OCI-LY7 (cell line): ENCODE measurements at regions of chr5 and their contacts with region 1.

Region 1: GRCh38 chr5:6712577-6713275 is 506 bp upstream of the TENT4A start:
- DNase-seq: peak; percentile 96
- H3K4me3 ChIP-seq: peak overlapping the region; percentile 71
- H3K27ac ChIP-seq: peak overlapping the region; percentile 70
- H3K4me1 ChIP-seq: peaks cover 50% of the 10 kb centered on the region
- CTCF ChIP-seq: 0 out of 2 replicates have a peak, but pooled peaks have one; percentile 2

Region 2: GRCh38 chr5:6652025-6652424 is 60.7 kb before region 1 on chr5:
- CTCF ChIA-PET with region 1: no interaction called
- POLR2A ChIA-PET with region 1: interaction called, 3 read pairs
- intact Hi-C with region 1: loop called (anchors 1 kb)
- DNase-seq: peak; percentile 94
- H3K4me3 ChIP-seq: peak overlapping the region; percentile 55
- H3K27ac ChIP-seq: peak overlapping the region; percentile 61
- H3K4me1 ChIP-seq: peaks cover 47% of the 10 kb centered on the region
- CTCF ChIP-seq: no peak

Region 3: DNA sequence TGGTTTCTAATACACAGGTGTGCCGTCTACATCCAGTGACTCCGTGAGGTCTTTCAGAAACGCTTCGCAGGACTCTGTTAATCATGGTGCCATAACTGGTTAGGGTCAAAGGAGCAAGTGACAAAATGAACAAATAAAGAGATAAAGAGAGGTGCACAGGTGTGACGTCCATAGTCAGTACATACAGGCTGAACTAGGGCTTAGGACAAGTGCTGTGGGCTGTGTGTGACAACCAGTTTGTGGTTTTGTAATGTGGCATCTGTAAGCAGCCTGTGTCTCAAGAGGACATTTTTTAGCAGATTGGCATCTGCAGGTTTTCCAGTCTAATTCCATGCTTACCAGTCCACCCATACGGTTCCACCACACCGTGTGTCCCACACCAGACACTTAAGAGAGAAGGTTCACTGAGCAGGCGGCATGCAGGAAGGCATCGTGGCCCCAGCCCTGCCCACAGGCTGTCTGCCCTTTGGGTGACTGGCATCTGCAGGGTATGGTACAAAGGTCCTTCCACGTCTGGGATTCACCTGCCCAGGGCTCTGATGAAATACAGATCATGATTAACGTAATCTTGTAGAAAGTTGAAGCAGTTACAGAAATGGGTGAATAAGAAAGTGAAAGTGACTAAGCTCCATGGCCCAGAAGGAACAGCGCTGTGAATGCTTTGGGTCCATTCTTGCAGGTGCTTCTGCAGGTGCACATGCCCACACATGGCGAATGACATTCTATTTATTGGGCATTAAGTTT is 52.6 kb before region 1 on chr5:
- CTCF ChIA-PET with region 1: no interaction called
- POLR2A ChIA-PET with region 1: no interaction called
- intact Hi-C with region 1: loop called (anchors 1 kb)
- DNase-seq: peak; percentile 88
- H3K4me3 ChIP-seq: peak overlapping the region; percentile 61
- H3K27ac ChIP-seq: peak overlapping the region; percentile 92
- H3K4me1 ChIP-seq: peaks cover 32% of the 10 kb centered on the region
- CTCF ChIP-seq: no peak

Region 4: GRCh38 chr5:6728011-6728794 is 15.5 kb after region 1 on chr5:
- CTCF ChIA-PET with region 1: no interaction called
- POLR2A ChIA-PET with region 1: interaction called, 8 read pairs
- intact Hi-C with region 1: loop called (anchors 2 kb)
- DNase-seq: peak; percentile 84
- H3K4me3 ChIP-seq: peak overlapping the region; percentile 55
- H3K27ac ChIP-seq: peak overlapping the region; percentile 86
- H3K4me1 ChIP-seq: peaks cover 54% of the 10 kb centered on the region
- CTCF ChIP-seq: peak; percentile 64

Region 5: GRCh38 chr5:6745706-6746222 is 33.0 kb after region 1 on chr5:
- CTCF ChIA-PET with region 1: interaction called, 3 read pairs
- POLR2A ChIA-PET with region 1: no interaction called
- intact Hi-C with region 1: loop called (anchors 2 kb)
- DNase-seq: peak; percentile 69
- H3K4me3 ChIP-seq: no peak overlapping the region
- H3K27ac ChIP-seq: no peak overlapping the region
- H3K4me1 ChIP-seq: peaks cover 11% of the 10 kb centered on the region
- CTCF ChIP-seq: peak; percentile 95

Region 6: GRCh38 chr5:7124959-7125358 is 412.2 kb after region 1 on chr5:
- CTCF ChIA-PET with region 1: no interaction called
- POLR2A ChIA-PET with region 1: no interaction called
- intact Hi-C with region 1: no loop called
- DNase-seq: no peak
- H3K4me3 ChIP-seq: no peak overlapping the region
- H3K27ac ChIP-seq: no peak overlapping the region
- H3K4me1 ChIP-seq: no peaks in the 10 kb centered on the region
- CTCF ChIP-seq: no peak